ENCODE measurements at regions of chr14 and their contacts with region 1.

Region 1: GRCh38 chr14:101825797-101826196 is 64.3 kb downstream of the PPP2R5C start:
- DNase-seq: no peak
- ATAC-seq: no peak
- H3K4me3 ChIP-seq: no peak overlapping the region
- H3K27ac ChIP-seq: no peak overlapping the region
- H3K4me1 ChIP-seq: no peaks in the 10 kb centered on the region
- H3K27me3 ChIP-seq: no peaks in the 10 kb centered on the region
- CTCF ChIP-seq: no peak

Region 2: GRCh38 chr14:101731187-101732080 is 94.4 kb before region 1 on chr14:
- CTCF ChIA-PET with region 1: no interaction called
- POLR2A ChIA-PET with region 1: no interaction called
- intact Hi-C with region 1: no loop called
- DNase-seq: peak; percentile 98
- ATAC-seq: peak; percentile 90
- H3K4me3 ChIP-seq: peak overlapping the region; percentile 52
- H3K27ac ChIP-seq: peak overlapping the region; percentile 99
- H3K4me1 ChIP-seq: peaks cover 44% of the 10 kb centered on the region
- H3K27me3 ChIP-seq: no peaks in the 10 kb centered on the region
- CTCF ChIP-seq: no peak

Region 3: GRCh38 chr14:101797856-101798255 is 27.9 kb before region 1 on chr14:
- CTCF ChIA-PET with region 1: no interaction called
- POLR2A ChIA-PET with region 1: no interaction called
- intact Hi-C with region 1: no loop called
- DNase-seq: no peak
- ATAC-seq: no peak
- H3K4me3 ChIP-seq: no peak overlapping the region
- H3K27ac ChIP-seq: no peak overlapping the region
- H3K4me1 ChIP-seq: no peaks in the 10 kb centered on the region
- H3K27me3 ChIP-seq: no peaks in the 10 kb centered on the region
- CTCF ChIP-seq: no peak

Region 4: DNA sequence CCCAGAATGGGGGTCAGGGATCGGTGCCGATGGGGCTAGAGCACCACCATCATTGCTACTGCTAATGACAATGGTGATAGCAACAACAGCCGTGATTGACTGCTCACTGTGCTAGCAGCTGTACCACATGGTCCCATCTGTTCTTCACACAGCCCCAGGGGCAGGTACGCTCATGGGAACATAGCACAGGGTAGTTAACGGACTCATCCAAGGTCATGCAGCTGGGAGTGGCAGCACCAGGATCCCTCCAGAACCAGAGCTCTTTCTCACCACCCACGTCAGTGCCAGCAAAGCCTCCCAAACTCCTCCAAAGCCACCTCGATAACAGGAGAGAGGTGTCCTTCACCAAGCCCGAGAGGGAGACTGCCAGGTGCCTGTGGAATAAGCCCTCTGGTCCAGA is 127.4 kb after region 1 on chr14:
- CTCF ChIA-PET with region 1: no interaction called
- POLR2A ChIA-PET with region 1: interaction called, 13 read pairs
- intact Hi-C with region 1: no loop called
- DNase-seq: no peak
- ATAC-seq: no peak
- H3K4me3 ChIP-seq: no peak overlapping the region
- H3K27ac ChIP-seq: no peak overlapping the region
- H3K4me1 ChIP-seq: peaks cover 9% of the 10 kb centered on the region
- H3K27me3 ChIP-seq: no peaks in the 10 kb centered on the region
- CTCF ChIP-seq: no peak

Region 5: DNA sequence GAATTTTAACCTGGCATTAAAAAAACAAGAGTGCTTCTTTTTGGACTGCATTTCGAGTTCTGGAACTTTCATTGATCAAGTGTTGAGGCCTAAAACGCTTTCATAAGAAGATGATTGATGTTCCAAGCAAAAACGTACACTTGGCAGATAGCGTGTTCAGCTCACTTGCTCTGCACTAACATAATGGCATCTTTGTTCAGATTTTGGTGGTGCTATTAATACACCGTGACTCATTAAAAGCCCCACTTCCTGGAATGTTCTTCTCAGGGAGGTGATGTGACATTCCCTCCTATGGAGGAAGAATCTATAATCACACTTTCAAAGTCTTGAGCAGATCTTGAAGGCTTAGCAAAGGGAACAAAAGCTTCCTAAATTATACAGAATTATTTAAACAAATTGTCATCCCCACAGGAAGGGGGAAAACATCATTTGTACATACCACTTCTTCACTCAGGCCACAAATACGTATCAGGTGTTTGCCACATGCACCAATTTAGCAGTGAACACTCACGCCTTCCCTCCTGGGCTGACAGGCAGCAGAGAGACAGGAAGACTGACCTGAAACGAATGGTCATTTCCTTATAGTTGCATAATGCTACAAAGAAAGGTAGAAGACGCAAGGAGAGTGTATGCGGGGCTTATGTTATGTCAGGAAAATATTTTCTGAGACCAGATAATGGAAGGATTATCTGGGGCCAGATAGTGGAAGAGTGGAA is 245.6 kb after region 1 on chr14:
- CTCF ChIA-PET with region 1: no interaction called
- POLR2A ChIA-PET with region 1: no interaction called
- intact Hi-C with region 1: no loop called
- DNase-seq: peak; percentile 92
- ATAC-seq: peak; percentile 93
- H3K4me3 ChIP-seq: no peak overlapping the region; the same call in 1 of the 2 replicates
- H3K27ac ChIP-seq: peak overlapping the region; percentile 92
- H3K4me1 ChIP-seq: peaks cover 19% of the 10 kb centered on the region
- H3K27me3 ChIP-seq: no peaks in the 10 kb centered on the region
- CTCF ChIP-seq: no peak

Measured in PC-3 (cell line).